B cell (primary cell): ENCODE measurements at regions of chr7 and their contacts with region 1.

Region 1: DNA sequence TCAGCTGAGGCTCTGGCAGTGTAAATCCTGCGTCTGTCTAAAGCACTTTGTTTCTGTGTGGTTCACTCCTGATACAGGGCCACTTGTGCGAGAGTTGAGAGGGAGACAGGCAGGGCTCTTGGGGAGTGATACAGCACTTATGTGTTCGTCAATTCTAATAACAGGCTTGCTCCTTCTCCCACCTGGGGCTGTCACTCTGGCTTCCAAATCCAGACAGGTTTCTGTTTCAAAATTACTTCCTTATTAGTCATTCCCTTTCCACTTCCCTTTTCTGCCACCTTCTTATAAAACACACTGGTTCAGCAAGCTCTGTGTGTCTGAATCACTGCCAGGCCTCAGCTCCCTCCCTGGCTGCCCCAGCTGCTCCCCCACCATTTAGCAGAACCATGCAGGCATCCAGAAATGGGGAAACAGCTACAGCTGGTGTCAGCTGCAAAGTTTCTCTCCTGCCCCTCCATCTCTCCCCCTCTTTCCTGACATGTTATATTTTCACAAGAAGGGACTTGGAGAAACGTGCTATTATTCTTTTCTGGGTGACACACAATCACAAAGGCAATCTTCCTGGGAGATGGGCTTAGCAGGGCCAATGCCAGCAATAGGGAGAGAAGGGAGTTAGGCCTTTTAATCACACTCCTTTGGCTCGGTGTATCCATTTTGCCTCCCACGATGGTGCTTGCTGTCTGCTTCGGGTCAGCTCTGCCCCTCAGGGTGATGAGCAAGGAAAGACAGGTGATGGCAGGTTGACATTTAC is 58.4 kb upstream of the ZNRF2 start:
- DNase-seq: peak; percentile 78
- ATAC-seq: peak; percentile 97
- H3K4me3 ChIP-seq: no peak overlapping the region
- H3K4me3 Mint-ChIP-seq: peak overlapping the region; percentile 6
- H3K27ac ChIP-seq: peak overlapping the region; percentile 41 to 49
- H3K27ac Mint-ChIP-seq: peak overlapping the region; percentile 85
- H3K4me1 ChIP-seq: peaks cover 13 to 16% of the 10 kb centered on the region in 2 donors
- H3K4me1 Mint-ChIP-seq: peaks cover 22% of the 10 kb centered on the region
- H3K27me3 ChIP-seq: no peaks in the 10 kb centered on the region
- H3K27me3 Mint-ChIP-seq: no peaks in the 10 kb centered on the region
- CTCF ChIP-seq: no peak

Region 2: GRCh38 chr7:30178748-30179436 is 47.1 kb before region 1 on chr7:
- CTCF ChIA-PET with region 1: no interaction called
- POLR2A ChIA-PET with region 1: no interaction called
- intact Hi-C with region 1: loop called (anchors 1 kb)
- DNase-seq: peak; percentile 72
- ATAC-seq: peak; percentile 90
- H3K4me3 ChIP-seq: peak overlapping the region in 3 of 5 experiments; percentile 9 to 37 (median 36)
- H3K4me3 Mint-ChIP-seq: peak overlapping the region; percentile 81
- H3K27ac ChIP-seq: peak overlapping the region; percentile 64 to 70
- H3K27ac Mint-ChIP-seq: peak overlapping the region; percentile 92
- H3K4me1 ChIP-seq: peaks cover 28 to 37% of the 10 kb centered on the region in 2 donors
- H3K4me1 Mint-ChIP-seq: peaks cover 44% of the 10 kb centered on the region
- H3K27me3 ChIP-seq: no peaks in the 10 kb centered on the region
- H3K27me3 Mint-ChIP-seq: no peaks in the 10 kb centered on the region
- CTCF ChIP-seq: no peak

Region 3: GRCh38 chr7:30201161-30201666 is 24.8 kb before region 1 on chr7:
- CTCF ChIA-PET with region 1: no interaction called
- POLR2A ChIA-PET with region 1: no interaction called
- intact Hi-C with region 1: loop called (anchors 2 kb)
- DNase-seq: peak; percentile 61
- ATAC-seq: peak; percentile 81
- H3K4me3 ChIP-seq: no peak overlapping the region
- H3K4me3 Mint-ChIP-seq: peak overlapping the region; percentile 49
- H3K27ac ChIP-seq: peak overlapping the region; percentile 25 to 54
- H3K27ac Mint-ChIP-seq: peak overlapping the region; percentile 73
- H3K4me1 ChIP-seq: peaks cover 16 to 20% of the 10 kb centered on the region in 2 donors
- H3K4me1 Mint-ChIP-seq: peaks cover 22% of the 10 kb centered on the region
- H3K27me3 ChIP-seq: no peaks in the 10 kb centered on the region
- H3K27me3 Mint-ChIP-seq: no peaks in the 10 kb centered on the region
- CTCF ChIP-seq: no peak

Region 4: DNA sequence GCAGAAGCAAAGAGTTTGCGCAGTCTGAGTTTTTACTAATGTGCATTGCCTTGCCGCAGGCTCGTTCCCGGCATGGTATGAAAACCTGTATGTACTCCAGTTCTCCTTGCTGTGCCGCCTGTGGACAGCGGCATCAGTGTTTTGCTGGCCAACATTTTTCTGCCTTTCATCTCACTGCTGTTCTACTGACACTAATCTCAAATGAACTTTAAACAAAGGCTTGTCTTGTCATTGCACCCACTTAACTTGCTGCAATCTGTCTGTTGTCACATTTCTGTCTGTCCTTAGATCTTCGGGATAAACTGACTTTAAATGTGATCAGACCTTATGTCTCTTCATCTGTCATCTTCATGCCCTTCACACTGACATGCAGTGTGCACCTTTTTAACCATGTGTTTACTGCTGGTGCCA is 13.3 kb before region 1 on chr7:
- CTCF ChIA-PET with region 1: no interaction called
- POLR2A ChIA-PET with region 1: no interaction called
- intact Hi-C with region 1: no loop called
- DNase-seq: no peak
- ATAC-seq: no peak
- H3K4me3 ChIP-seq: no peak overlapping the region
- H3K4me3 Mint-ChIP-seq: no peak overlapping the region
- H3K27ac ChIP-seq: no peak overlapping the region
- H3K27ac Mint-ChIP-seq: peak overlapping the region; percentile 38
- H3K4me1 ChIP-seq: peaks cover 9 to 21% of the 10 kb centered on the region in 2 donors
- H3K4me1 Mint-ChIP-seq: peaks cover 19% of the 10 kb centered on the region
- H3K27me3 ChIP-seq: no peaks in the 10 kb centered on the region
- H3K27me3 Mint-ChIP-seq: no peaks in the 10 kb centered on the region
- CTCF ChIP-seq: no peak

Region 5: DNA sequence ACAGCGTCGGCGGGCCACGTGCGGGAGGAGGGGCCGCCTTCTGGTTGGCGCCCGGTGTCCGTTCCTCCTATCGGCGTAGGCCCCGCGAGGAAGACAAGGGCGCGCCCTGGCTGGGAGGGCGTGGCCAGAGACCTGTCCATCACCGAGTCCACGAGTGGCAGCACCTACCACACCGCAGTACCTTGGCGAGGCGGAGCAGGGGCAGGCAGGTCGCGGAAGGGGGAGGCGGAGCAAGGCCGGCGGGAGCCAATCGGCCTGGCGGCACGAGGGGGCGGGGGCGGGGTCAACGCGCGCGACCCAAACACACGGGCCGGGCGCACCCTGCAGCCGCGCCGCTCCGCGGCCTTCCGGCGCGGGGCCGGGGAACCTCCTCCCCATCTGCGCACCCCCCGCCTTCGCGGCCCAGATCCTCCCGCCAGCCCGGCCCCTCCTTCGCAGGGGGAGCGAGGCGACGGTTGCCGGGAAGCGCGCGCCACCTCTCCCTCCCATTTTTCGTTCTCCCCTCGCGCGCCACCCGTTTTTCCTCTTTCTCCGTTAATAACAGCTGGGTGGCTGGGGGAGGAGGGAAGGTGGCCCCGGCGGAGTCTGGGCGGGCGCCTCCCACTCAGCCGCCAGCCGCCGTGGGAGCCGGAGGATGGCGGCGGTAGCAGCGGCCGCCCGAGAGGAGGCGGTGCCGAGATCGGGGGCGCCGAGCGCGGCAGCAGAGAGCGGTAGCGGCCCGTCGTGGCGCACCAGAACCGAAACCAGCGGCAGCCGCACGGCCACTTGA is 58.4 kb after region 1 on chr7 and contains the start of gene ZNRF2:
- CTCF ChIA-PET with region 1: no interaction called
- POLR2A ChIA-PET with region 1: no interaction called
- intact Hi-C with region 1: loop called (anchors 2 kb)
- DNase-seq: peak; percentile 99
- ATAC-seq: peak; percentile 80
- H3K4me3 ChIP-seq: peak within 1 kb of the TSS; percentile 46 to 91 (median 80)
- H3K4me3 Mint-ChIP-seq: peak within 1 kb of the TSS; percentile 88
- H3K27ac ChIP-seq: peak within 1 kb of the TSS; percentile 84 to 90
- H3K27ac Mint-ChIP-seq: peak within 1 kb of the TSS; percentile 96
- H3K4me1 ChIP-seq: peaks cover 19 to 30% of the 10 kb centered on the region in 2 donors
- H3K4me1 Mint-ChIP-seq: peaks cover 44% of the 10 kb centered on the region
- H3K27me3 ChIP-seq: no peaks in the 10 kb centered on the region
- H3K27me3 Mint-ChIP-seq: no peaks in the 10 kb centered on the region
- CTCF ChIP-seq: peak; percentile 41
- total RNA-seq, gene ZNRF2: 32.0 and 33.6 TPM in 2 replicates

Region 6: GRCh38 chr7:30531286-30531685 is 305.2 kb after region 1 on chr7:
- CTCF ChIA-PET with region 1: no interaction called
- POLR2A ChIA-PET with region 1: no interaction called
- intact Hi-C with region 1: no loop called
- DNase-seq: no peak
- ATAC-seq: no peak
- H3K4me3 ChIP-seq: no peak overlapping the region
- H3K4me3 Mint-ChIP-seq: no peak overlapping the region
- H3K27ac ChIP-seq: no peak overlapping the region
- H3K27ac Mint-ChIP-seq: no peak overlapping the region
- H3K4me1 ChIP-seq: no peaks in the 10 kb centered on the region
- H3K4me1 Mint-ChIP-seq: no peaks in the 10 kb centered on the region
- H3K27me3 ChIP-seq: no peaks in the 10 kb centered on the region
- H3K27me3 Mint-ChIP-seq: no peaks in the 10 kb centered on the region
- CTCF ChIP-seq: no peak